Stomach (tissue), 19 donors: ENCODE measurements at regions of chr16 and their contacts with region 1.

Region 1: GRCh38 chr16:30028438-30029076 is 2.5 kb downstream of the TLCD3B start:
- DNase-seq: peak in 1 of 2 donors; percentile 68
- H3K4me3 ChIP-seq: no peak overlapping the region
- H3K27ac ChIP-seq: no peak overlapping the region
- H3K4me1 ChIP-seq: peaks cover 7 to 12% (median 9%) of the 10 kb centered on the region in 4 donors
- H3K27me3 ChIP-seq: peaks cover 24 to 95% (median 67%) of the 10 kb centered on the region in 3 donors
- CTCF ChIP-seq: no peak
- EP300 ChIP-seq: no peak
- POLR2A ChIP-seq: no peak

Region 2: DNA sequence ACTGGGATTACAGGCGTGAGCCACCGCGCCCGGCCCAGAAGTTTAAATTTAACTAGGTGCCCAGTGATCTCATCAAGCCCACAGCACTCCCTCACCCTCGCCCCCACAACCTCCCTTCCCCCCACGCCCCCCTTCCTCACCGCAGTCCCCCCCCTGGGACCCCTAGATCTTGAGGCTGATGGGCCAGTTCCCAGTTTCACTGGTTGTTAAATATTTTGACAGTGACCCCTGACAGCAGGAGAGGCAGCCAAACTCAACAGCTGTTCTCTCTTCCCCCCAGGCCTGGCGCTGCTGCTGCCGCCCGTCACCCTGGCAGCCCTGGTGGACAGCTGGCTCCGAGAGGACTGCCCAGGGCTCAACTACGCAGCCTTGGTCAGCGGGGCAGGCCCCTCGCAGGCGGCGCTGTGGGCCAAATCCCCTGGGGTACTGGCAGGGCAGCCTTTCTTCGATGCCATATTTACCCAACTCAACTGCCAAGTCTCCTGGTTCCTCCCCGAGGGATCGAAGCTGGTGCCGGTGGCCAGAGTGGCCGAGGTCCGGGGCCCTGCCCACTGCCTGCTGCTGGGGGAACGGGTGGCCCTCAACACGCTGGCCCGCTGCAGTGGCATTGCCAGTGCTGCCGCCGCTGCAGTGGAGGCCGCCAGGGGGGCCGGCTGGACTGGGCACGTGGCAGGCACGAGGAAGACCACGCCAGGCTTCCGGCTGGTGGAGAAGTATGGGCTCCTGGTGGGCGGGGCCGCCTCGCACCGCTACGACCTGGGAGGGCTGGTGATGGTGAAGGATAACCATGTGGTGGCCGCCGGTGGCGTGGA is 334.0 kb before region 1 on chr16:
- intact Hi-C with region 1: loop called (anchors 5 kb)
- DNase-seq: no peak
- H3K4me3 ChIP-seq: no peak overlapping the region
- H3K27ac ChIP-seq: no peak overlapping the region
- H3K4me1 ChIP-seq: peaks cover 0 to 4% (median 0%) of the 10 kb centered on the region in 4 donors
- H3K27me3 ChIP-seq: no peaks in the 10 kb centered on the region
- CTCF ChIP-seq: no peak
- EP300 ChIP-seq: no peak
- POLR2A ChIP-seq: no peak

Region 3: DNA sequence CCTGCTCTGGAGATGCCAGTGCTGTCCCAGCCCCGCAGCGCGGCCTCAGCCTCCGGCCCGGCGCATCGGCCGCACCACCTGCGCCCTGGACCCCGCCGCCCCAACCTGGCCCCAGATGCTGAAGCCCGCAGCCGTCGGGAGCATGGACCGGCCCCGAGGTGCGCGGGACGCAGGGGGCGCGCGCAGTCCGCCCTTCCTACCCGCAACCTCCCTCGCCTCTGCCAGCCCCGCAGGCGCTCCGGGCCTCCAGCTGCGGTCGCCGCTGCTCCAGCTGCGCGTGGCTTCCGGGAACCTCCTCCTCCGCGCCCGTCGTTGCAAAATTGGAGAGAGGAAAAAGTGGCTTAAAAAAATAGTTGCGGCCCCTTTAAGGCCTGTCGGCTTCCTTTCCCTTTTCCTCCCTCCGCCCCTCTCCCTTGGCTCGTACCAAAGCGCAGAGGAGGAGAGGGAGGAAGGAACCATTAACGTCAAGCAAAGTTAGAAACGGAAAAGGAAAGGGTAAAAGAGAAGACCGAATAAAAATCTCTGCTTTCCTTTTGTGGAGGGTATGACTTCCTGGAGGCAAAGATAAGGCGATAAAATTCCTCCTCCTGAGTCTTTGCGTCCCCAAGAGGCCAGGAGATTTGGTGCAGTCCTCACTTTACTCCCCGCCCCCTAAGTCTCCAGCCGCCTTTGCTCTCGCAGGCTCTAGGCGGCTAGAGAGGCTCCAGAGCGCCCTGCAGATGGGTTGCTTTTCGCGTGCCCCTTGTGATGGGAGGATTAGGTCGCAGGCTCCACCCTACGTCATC is 165.5 kb before region 1 on chr16 and contains the start of gene CDIPT:
- intact Hi-C with region 1: loop called (anchors 10 kb)
- DNase-seq: peak; percentile 94 to 99
- H3K4me3 ChIP-seq: peak within 1 kb of the TSS; percentile 94 to 99 (median 98)
- H3K27ac ChIP-seq: peak within 1 kb of the TSS; percentile 85 to 96 (median 92)
- H3K4me1 ChIP-seq: peaks cover 15 to 46% (median 37%) of the 10 kb centered on the region in 4 donors
- H3K27me3 ChIP-seq: no peaks in the 10 kb centered on the region
- CTCF ChIP-seq: peak in 5 of 7 experiments; percentile 45 to 76 (median 52)
- EP300 ChIP-seq: no peak
- POLR2A ChIP-seq: no peak
- total RNA-seq, gene CDIPT: 2.3 to 91.5 (median 54.5) TPM